ENCODE measurements at regions of chr6 and their contacts with region 1.

Region 1: GRCh38 chr6:13466304-13467215 is 20.8 kb downstream of the GFOD1 start:
- DNase-seq: no peak
- H3K4me3 ChIP-seq: no peak overlapping the region
- H3K27ac ChIP-seq: peak overlapping the region in 2 of 4 donors; percentile 30 to 47
- H3K4me1 ChIP-seq: peaks cover 7 to 57% (median 19%) of the 10 kb centered on the region in 3 donors
- H3K27me3 ChIP-seq: no peaks in the 10 kb centered on the region
- CTCF ChIP-seq: no peak
- POLR2A ChIP-seq: no peak

Region 2: GRCh38 chr6:13574149-13574570 is 107.6 kb after region 1 on chr6:
- intact Hi-C with region 1: loop called (anchors 10 kb)
- DNase-seq: peak; percentile 71
- H3K4me3 ChIP-seq: peak overlapping the region; percentile 69 to 99 (median 83)
- H3K27ac ChIP-seq: peak overlapping the region; percentile 93 to 100 (median 98)
- H3K4me1 ChIP-seq: peaks cover 0 to 23% (median 11%) of the 10 kb centered on the region in 3 donors
- H3K27me3 ChIP-seq: no peaks in the 10 kb centered on the region
- CTCF ChIP-seq: peak; percentile 34 to 76 (median 53)
- POLR2A ChIP-seq: peak in 1 of 4 donors; percentile 71

Measured in esophagus squamous epithelium (tissue), 5 donors.